CD8-positive, alpha-beta T cell (primary cell): ENCODE measurements at regions of chr14 and their contacts with region 1.

Region 1: GRCh38 chr14:100375963-100376735 is 53.0 kb downstream of the SLC25A47 start:
- DNase-seq: peak; percentile 86 to 96 (median 90)
- ATAC-seq: peak; percentile 81
- H3K4me3 ChIP-seq: peak within 1 kb of the TSS; percentile 63 to 85
- H3K4me3 Mint-ChIP-seq: peak within 1 kb of the TSS; percentile 92
- H3K27ac ChIP-seq: peak within 1 kb of the TSS; percentile 64 to 90
- H3K27ac Mint-ChIP-seq: peak within 1 kb of the TSS; percentile 91
- H3K4me1 ChIP-seq: peaks cover 23% of the 10 kb centered on the region
- H3K4me1 Mint-ChIP-seq: peaks cover 41% of the 10 kb centered on the region
- H3K27me3 ChIP-seq: no peaks in the 10 kb centered on the region
- H3K27me3 Mint-ChIP-seq: no peaks in the 10 kb centered on the region
- CTCF ChIP-seq: no peak

Region 2: DNA sequence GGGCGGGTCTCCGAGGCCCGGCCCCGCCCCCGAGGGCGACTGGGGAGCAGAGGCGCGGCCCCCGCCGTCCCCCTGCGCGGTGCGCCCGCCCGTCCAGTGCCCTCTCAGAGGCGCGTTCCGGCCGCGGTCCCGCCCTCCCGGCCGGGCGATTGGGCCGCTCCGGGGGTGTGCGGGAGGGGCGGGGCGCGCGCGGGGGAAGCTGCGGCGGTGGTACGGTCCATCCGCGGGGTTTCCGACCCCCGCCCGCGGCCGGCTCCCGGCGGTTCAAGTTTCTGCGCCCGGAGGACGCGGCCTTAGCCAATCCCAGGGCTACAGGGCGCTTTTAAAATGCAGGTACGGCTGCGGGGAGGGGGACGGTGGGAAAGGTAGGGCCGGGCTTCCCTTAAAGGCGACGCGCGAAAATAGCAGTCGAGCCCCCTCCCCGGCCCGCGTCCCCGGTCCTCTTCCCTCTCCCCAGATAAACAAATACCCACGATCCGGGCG is 771.8 kb before region 1 on chr14:
- CTCF ChIA-PET with region 1: no interaction called
- POLR2A ChIA-PET with region 1: no interaction called
- intact Hi-C with region 1: loop called in 1 of 2 experiments (anchors 5 kb)
- DNase-seq: peak; percentile 91 to 98 (median 94)
- ATAC-seq: peak; percentile 89
- H3K4me3 ChIP-seq: peak overlapping the region; percentile 92 to 98
- H3K4me3 Mint-ChIP-seq: peak overlapping the region; percentile 90
- H3K27ac ChIP-seq: peak overlapping the region; percentile 66 to 73
- H3K27ac Mint-ChIP-seq: peak overlapping the region; percentile 84
- H3K4me1 ChIP-seq: peaks cover 23% of the 10 kb centered on the region
- H3K4me1 Mint-ChIP-seq: peaks cover 27% of the 10 kb centered on the region
- H3K27me3 ChIP-seq: no peaks in the 10 kb centered on the region
- H3K27me3 Mint-ChIP-seq: no peaks in the 10 kb centered on the region
- CTCF ChIP-seq: no peak

Region 3: GRCh38 chr14:100067971-100068959 is 307.9 kb before region 1 on chr14:
- CTCF ChIA-PET with region 1: no interaction called
- POLR2A ChIA-PET with region 1: no interaction called
- intact Hi-C with region 1: loop called (anchors 5 kb)
- DNase-seq: peak; percentile 70 to 98 (median 88)
- ATAC-seq: peak; percentile 50
- H3K4me3 ChIP-seq: peak overlapping the region; percentile 73 to 85
- H3K4me3 Mint-ChIP-seq: peak overlapping the region; percentile 100
- H3K27ac ChIP-seq: peak overlapping the region; percentile 83 to 87
- H3K27ac Mint-ChIP-seq: peak overlapping the region; percentile 99
- H3K4me1 ChIP-seq: peaks cover 59% of the 10 kb centered on the region
- H3K4me1 Mint-ChIP-seq: peaks cover 82% of the 10 kb centered on the region
- H3K27me3 ChIP-seq: no peaks in the 10 kb centered on the region
- H3K27me3 Mint-ChIP-seq: no peaks in the 10 kb centered on the region
- CTCF ChIP-seq: no peak

Region 4: GRCh38 chr14:100213956-100214774 is 162.0 kb before region 1 on chr14:
- CTCF ChIA-PET with region 1: no interaction called
- POLR2A ChIA-PET with region 1: no interaction called
- intact Hi-C with region 1: loop called in 1 of 2 experiments (anchors 1 kb)
- DNase-seq: peak; percentile 78 to 95 (median 92)
- ATAC-seq: peak; percentile 97
- H3K4me3 ChIP-seq: peak overlapping the region; percentile 70 to 92
- H3K4me3 Mint-ChIP-seq: peak overlapping the region; percentile 80
- H3K27ac ChIP-seq: peak overlapping the region; percentile 88 to 90
- H3K27ac Mint-ChIP-seq: peak overlapping the region; percentile 90
- H3K4me1 ChIP-seq: peaks cover 33% of the 10 kb centered on the region
- H3K4me1 Mint-ChIP-seq: peaks cover 29% of the 10 kb centered on the region
- H3K27me3 ChIP-seq: no peaks in the 10 kb centered on the region
- H3K27me3 Mint-ChIP-seq: no peaks in the 10 kb centered on the region
- CTCF ChIP-seq: no peak

Region 5: GRCh38 chr14:100285021-100285912 is 90.9 kb before region 1 on chr14:
- CTCF ChIA-PET with region 1: interaction called, 16 read pairs
- POLR2A ChIA-PET with region 1: no interaction called
- intact Hi-C with region 1: loop called (anchors 1 kb)
- DNase-seq: peak; percentile 64 to 88 (median 78)
- ATAC-seq: peak; percentile 91
- H3K4me3 ChIP-seq: peak overlapping the region; percentile 63 to 90
- H3K4me3 Mint-ChIP-seq: peak overlapping the region; percentile 81
- H3K27ac ChIP-seq: peak overlapping the region; percentile 72 to 76
- H3K27ac Mint-ChIP-seq: no peak overlapping the region
- H3K4me1 ChIP-seq: peaks cover 5% of the 10 kb centered on the region
- H3K4me1 Mint-ChIP-seq: peaks cover 11% of the 10 kb centered on the region
- H3K27me3 ChIP-seq: no peaks in the 10 kb centered on the region
- H3K27me3 Mint-ChIP-seq: no peaks in the 10 kb centered on the region
- CTCF ChIP-seq: peak; percentile 96

Region 6: GRCh38 chr14:100645192-100645990 is 269.2 kb after region 1 on chr14:
- CTCF ChIA-PET with region 1: interaction called, 188 read pairs
- POLR2A ChIA-PET with region 1: no interaction called
- intact Hi-C with region 1: no loop called
- DNase-seq: peak; percentile 65 to 91 (median 89)
- ATAC-seq: peak; percentile 88
- H3K4me3 ChIP-seq: no peak overlapping the region
- H3K4me3 Mint-ChIP-seq: no peak overlapping the region
- H3K27ac ChIP-seq: no peak overlapping the region
- H3K27ac Mint-ChIP-seq: peak overlapping the region; percentile 14
- H3K4me1 ChIP-seq: peaks cover 46% of the 10 kb centered on the region
- H3K4me1 Mint-ChIP-seq: peaks cover 46% of the 10 kb centered on the region
- H3K27me3 ChIP-seq: no peaks in the 10 kb centered on the region
- H3K27me3 Mint-ChIP-seq: no peaks in the 10 kb centered on the region
- CTCF ChIP-seq: peak; percentile 72